GM10248 (cell line): ENCODE measurements at regions of chr17 and their contacts with region 1.

Region 1: GRCh38 chr17:42248351-42249179 is 27.6 kb downstream of the STAT5B start:
- DNase-seq: peak; percentile 78
- CTCF ChIP-seq: peak; percentile 11

Region 2: DNA sequence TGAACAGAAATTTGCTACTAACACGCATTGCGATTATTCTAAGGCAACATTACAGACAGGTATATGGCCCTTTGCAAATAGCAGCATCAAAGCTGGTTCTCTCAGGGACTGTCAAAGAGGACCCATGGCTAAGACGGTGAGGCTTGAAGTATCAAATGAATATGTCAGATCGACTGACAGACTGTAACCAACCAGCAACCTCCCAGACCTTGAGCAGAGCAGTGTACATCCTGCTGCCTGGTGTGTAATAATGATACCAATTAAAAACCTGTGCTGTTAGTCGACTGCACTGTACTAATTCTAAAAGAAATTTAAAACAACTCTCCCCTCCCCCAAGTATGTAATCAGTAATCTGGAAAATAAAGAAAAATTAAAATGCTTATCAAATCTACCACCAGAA is 18.3 kb before region 1 on chr17:
- CTCF ChIA-PET with region 1: interaction called, 28 read pairs
- POLR2A ChIA-PET with region 1: no interaction called
- DNase-seq: no peak
- CTCF ChIP-seq: no peak